Activated CD4-positive, alpha-beta memory T cell treated with anti-CD3 and anti-CD28 coated beads for 36 hours (primary cell): ENCODE measurements at regions of chr4 and their contacts with region 1.

Region 1: GRCh38 chr4:39044364-39044955 is 12.3 kb upstream of the TMEM156 start:
- DNase-seq: peak; percentile 99
- H3K4me3 Mint-ChIP-seq: peak overlapping the region; percentile 75
- H3K27ac Mint-ChIP-seq: peak overlapping the region; percentile 88
- H3K4me1 Mint-ChIP-seq: peaks cover 50% of the 10 kb centered on the region
- H3K27me3 Mint-ChIP-seq: no peaks in the 10 kb centered on the region

Region 2: DNA sequence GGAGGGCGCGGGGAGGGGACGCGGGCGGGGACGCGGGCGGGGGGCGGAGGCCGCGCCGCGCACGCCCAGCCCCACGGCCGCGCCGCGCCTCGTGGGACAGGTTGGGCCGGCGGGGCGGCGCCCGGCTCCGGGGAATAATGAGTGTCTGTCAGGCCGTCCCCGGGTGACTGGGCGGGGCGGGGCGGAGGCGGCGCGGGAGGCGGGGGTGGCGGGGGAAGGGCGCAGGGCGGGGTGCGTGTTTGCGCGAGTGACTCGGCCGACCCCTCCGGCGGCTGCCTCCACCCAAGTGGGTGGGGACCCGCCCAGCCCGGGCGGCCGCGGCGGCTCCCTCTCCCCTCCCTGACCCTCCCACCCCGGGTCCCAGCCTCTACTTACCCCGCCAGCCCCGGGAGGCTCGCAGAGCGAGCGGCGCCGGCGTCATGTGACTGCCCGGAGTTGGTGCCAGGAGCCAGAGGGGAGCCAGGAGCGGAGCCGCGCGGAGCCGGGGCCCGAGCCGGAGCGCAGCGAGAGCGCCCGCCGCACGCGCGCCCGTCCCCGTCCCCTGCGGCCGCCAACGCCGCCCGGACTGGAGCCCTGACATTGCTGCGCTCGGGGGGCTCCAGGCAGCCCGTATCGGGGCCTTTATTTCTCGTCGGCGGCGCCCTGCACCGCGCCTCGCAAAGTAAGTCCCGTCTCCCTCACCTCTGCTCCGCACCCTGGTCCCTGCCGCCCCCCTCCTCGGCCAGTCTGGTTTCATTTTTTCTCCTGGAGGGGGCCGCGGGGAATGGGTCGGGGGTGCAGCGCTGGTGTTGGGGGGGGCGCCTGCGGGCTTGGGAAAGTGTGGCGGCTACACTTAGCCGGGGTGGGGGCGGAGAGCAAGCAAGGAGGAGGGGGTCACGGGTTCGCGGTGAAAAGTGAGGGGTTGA is 380.4 kb before region 1 on chr4 and contains the start of gene KLF3:
- CTCF ChIA-PET with region 1: no interaction called
- POLR2A ChIA-PET with region 1: no interaction called
- intact Hi-C with region 1: loop called (anchors 10 kb)
- DNase-seq: peak; percentile 86
- H3K4me3 Mint-ChIP-seq: peak within 1 kb of the TSS; percentile 83
- H3K27ac Mint-ChIP-seq: peak within 1 kb of the TSS; percentile 68
- H3K4me1 Mint-ChIP-seq: peaks cover 61% of the 10 kb centered on the region
- H3K27me3 Mint-ChIP-seq: no peaks in the 10 kb centered on the region
- total RNA-seq, gene KLF3: 9.1 to 9.9 TPM

Region 3: DNA sequence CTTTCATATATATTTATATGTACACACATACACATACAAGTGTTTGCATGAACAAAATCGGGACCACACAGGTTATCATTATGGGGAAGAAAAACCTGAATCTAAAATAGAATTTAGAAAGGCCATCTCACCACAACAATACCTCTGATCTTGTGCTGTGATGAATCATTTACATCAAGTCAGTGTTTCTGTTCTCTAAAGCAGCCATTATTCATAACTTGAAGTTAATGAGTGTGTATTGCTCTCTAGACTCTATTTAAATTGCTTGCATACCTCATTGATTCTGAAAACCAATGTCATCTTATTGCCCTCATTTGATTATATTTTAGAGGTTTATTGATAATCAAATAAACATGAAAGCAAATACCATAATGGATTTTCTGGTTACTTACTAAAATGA is 105.3 kb before region 1 on chr4:
- CTCF ChIA-PET with region 1: interaction called, 4 read pairs
- POLR2A ChIA-PET with region 1: interaction called, 3 read pairs
- intact Hi-C with region 1: loop called (anchors 1 kb)
- DNase-seq: no peak
- H3K4me3 Mint-ChIP-seq: no peak overlapping the region
- H3K27ac Mint-ChIP-seq: peak overlapping the region; percentile 68
- H3K4me1 Mint-ChIP-seq: peaks cover 41% of the 10 kb centered on the region
- H3K27me3 Mint-ChIP-seq: no peaks in the 10 kb centered on the region

Region 4: GRCh38 chr4:39134683-39135319 is 90.3 kb after region 1 on chr4:
- CTCF ChIA-PET with region 1: interaction called, 5 read pairs
- POLR2A ChIA-PET with region 1: no interaction called
- intact Hi-C with region 1: loop called (anchors 2 kb)
- DNase-seq: no peak
- H3K4me3 Mint-ChIP-seq: no peak overlapping the region
- H3K27ac Mint-ChIP-seq: no peak overlapping the region
- H3K4me1 Mint-ChIP-seq: peaks cover 7% of the 10 kb centered on the region
- H3K27me3 Mint-ChIP-seq: no peaks in the 10 kb centered on the region

Region 5: GRCh38 chr4:39331191-39331590 is 286.7 kb after region 1 on chr4:
- CTCF ChIA-PET with region 1: no interaction called
- POLR2A ChIA-PET with region 1: no interaction called
- intact Hi-C with region 1: no loop called
- DNase-seq: no peak
- H3K4me3 Mint-ChIP-seq: no peak overlapping the region
- H3K27ac Mint-ChIP-seq: no peak overlapping the region
- H3K4me1 Mint-ChIP-seq: peaks cover 18% of the 10 kb centered on the region
- H3K27me3 Mint-ChIP-seq: no peaks in the 10 kb centered on the region

Region 6: DNA sequence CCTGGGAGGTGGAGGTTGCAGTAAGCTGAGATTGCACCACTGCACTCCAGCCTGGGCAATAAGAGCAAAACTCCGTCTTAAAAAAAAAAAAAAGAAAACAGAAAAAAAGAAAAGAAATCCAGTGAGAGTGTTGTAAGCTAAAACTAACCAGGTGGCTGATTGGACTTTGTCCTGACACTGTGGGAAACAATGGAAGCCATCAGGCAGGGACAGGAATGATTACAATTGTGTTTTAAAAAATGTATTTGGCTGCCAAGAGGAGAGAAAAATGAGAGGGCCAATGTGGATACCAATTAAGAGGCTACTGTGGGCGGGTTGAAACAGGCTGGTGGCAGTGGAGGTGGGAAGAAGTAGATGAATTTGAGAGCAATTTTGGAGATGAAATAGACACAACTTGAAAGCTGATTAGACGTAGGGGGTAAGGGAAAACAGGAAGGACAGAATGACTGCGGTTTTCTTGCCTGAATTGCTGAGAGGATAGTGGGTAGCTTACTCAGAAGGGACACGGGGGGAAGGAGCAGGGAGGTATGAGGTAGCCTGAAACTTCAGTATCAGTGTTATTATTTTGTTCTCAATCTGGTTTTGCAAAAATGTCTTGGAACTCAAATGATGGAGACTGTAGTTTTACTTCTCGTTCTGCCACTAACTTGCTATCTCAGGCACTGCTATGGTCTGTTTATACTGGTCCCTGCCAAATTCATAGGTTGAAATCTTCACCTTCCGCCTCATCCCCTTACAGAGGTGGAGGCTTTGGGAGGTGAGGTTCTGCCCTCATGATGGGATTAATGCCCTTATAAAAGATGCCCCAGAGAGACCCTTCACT is 1245.1 kb after region 1 on chr4:
- CTCF ChIA-PET with region 1: no interaction called
- POLR2A ChIA-PET with region 1: no interaction called
- intact Hi-C with region 1: loop called (anchors 5 kb)
- DNase-seq: peak; percentile 59
- H3K4me3 Mint-ChIP-seq: peak overlapping the region; percentile 44
- H3K27ac Mint-ChIP-seq: peak overlapping the region; percentile 86
- H3K4me1 Mint-ChIP-seq: peaks cover 54% of the 10 kb centered on the region
- H3K27me3 Mint-ChIP-seq: no peaks in the 10 kb centered on the region